ENCODE measurements at regions of chr16 and their contacts with region 1.

Region 1: DNA sequence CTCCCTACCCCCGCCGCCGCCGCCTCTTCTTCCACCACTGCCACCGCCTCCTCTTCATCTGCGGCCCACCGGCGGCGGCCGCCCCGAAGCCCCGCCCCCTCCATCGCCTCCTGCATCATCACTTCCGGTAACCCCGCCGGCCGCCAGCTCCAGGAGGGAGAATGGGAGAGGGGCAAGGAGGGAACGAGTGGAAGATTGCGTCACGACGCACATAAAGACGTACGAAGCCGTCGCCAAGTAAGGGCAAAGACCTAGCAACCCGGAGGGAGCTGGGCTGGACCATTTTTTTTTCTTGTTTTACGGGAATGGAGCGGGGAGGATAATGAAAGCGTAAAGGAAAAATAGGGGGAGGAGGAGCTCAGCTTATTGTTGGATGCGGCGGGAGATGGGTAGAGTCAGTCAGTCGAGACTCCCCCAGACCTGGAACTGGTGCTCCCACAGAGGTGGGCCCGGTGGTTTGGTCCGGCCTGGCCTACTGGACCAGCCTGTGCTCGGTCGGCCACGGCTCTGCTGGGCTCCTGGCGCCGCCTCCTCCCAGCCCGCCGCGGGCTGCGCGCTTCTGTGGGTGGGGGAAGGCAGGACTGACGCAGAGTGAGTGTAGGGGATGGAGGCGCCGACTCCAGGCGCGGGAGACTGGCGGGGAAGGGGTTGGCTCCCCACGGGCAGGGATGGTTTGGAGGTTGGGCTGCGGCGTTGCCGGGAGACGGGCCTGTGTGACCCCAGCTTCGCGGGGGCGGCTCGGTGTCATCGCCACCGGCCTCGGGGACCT is at the starts of genes DCUN1D3 and LYRM1:
- DNase-seq: peak; percentile 97 to 99
- ATAC-seq: peak; percentile 91 to 93 (median 92)
- H3K4me3 ChIP-seq: peak within 1 kb of the TSS; percentile 91
- H3K27ac ChIP-seq: peak within 1 kb of the TSS; percentile 96
- H3K4me1 ChIP-seq: peaks cover 41% of the 10 kb centered on the region
- H3K27me3 ChIP-seq: no peaks in the 10 kb centered on the region
- CTCF ChIP-seq: no peak
- total RNA-seq, gene DCUN1D3: 6.8 to 19.6 (median 11.6) TPM
- total RNA-seq, gene LYRM1: 27.2 to 47.9 (median 32.7) TPM

Region 2: GRCh38 chr16:20806168-20807050 is 94.1 kb before region 1 on chr16 and contains the starts of genes ERI2 and REXO5:
- intact Hi-C with region 1: loop called in 1 of 2 experiments (anchors 5 kb)
- DNase-seq: peak; percentile 89 to 94
- ATAC-seq: peak; percentile 93 to 96 (median 94)
- H3K4me3 ChIP-seq: peak within 1 kb of the TSS; percentile 94
- H3K27ac ChIP-seq: peak within 1 kb of the TSS; percentile 92
- H3K4me1 ChIP-seq: peaks cover 17% of the 10 kb centered on the region
- H3K27me3 ChIP-seq: no peaks in the 10 kb centered on the region
- CTCF ChIP-seq: peak; percentile 25
- total RNA-seq, gene ERI2: 4.2 to 9.5 (median 7.9) TPM
- total RNA-seq, gene REXO5: 0.63 to 1.4 (median 0.92) TPM

Region 3: GRCh38 chr16:20849587-20850390 is 50.7 kb before region 1 on chr16:
- intact Hi-C with region 1: loop called in 1 of 2 experiments (anchors 5 kb)
- DNase-seq: peak; percentile 69 to 82
- ATAC-seq: peak; percentile 56 to 74 (median 68)
- H3K4me3 ChIP-seq: no peak overlapping the region
- H3K27ac ChIP-seq: no peak overlapping the region
- H3K4me1 ChIP-seq: peaks cover 15% of the 10 kb centered on the region
- H3K27me3 ChIP-seq: no peaks in the 10 kb centered on the region
- CTCF ChIP-seq: peak; percentile 99

Region 4: GRCh38 chr16:20866145-20866772 is 34.2 kb before region 1 on chr16:
- intact Hi-C with region 1: loop called in 1 of 2 experiments (anchors 5 kb)
- DNase-seq: peak in 1 of 2 donors; percentile 58
- ATAC-seq: peak; percentile 34 to 69 (median 58)
- H3K4me3 ChIP-seq: no peak overlapping the region
- H3K27ac ChIP-seq: peak overlapping the region; percentile 31
- H3K4me1 ChIP-seq: peaks cover 50% of the 10 kb centered on the region
- H3K27me3 ChIP-seq: no peaks in the 10 kb centered on the region
- CTCF ChIP-seq: no peak